ENCODE measurements at regions of chr14 and their contacts with region 1.

Region 1: GRCh38 chr14:96027431-96028355 is 11.5 kb upstream of the C14orf132 start:
- DNase-seq: peak in 6 of 14 experiments; percentile 4 to 57 (median 10)
- ATAC-seq: peak; percentile 76
- H3K4me3 ChIP-seq: no peak overlapping the region
- H3K4me3 Mint-ChIP-seq: peak overlapping the region; percentile 30
- H3K27ac ChIP-seq: peak overlapping the region in 1 of 2 donors; percentile 17
- H3K27ac Mint-ChIP-seq: peak overlapping the region; percentile 94
- H3K4me1 ChIP-seq: peaks cover 16% of the 10 kb centered on the region
- H3K4me1 Mint-ChIP-seq: peaks cover 29% of the 10 kb centered on the region
- H3K27me3 ChIP-seq: peaks cover 0 to 9% of the 10 kb centered on the region in 2 experiments
- H3K27me3 Mint-ChIP-seq: no peaks in the 10 kb centered on the region
- CTCF ChIP-seq: no peak

Region 2: GRCh38 chr14:95952945-95953724 is 74.6 kb before region 1 on chr14:
- CTCF ChIA-PET with region 1: no interaction called
- POLR2A ChIA-PET with region 1: no interaction called
- intact Hi-C with region 1: no loop called
- DNase-seq: no peak
- ATAC-seq: no peak
- H3K4me3 ChIP-seq: no peak overlapping the region
- H3K4me3 Mint-ChIP-seq: no peak overlapping the region
- H3K27ac ChIP-seq: no peak overlapping the region
- H3K27ac Mint-ChIP-seq: no peak overlapping the region
- H3K4me1 ChIP-seq: no peaks in the 10 kb centered on the region
- H3K4me1 Mint-ChIP-seq: no peaks in the 10 kb centered on the region
- H3K27me3 ChIP-seq: peaks cover 0 to 4% of the 10 kb centered on the region in 2 experiments
- H3K27me3 Mint-ChIP-seq: peaks cover 64% of the 10 kb centered on the region
- CTCF ChIP-seq: no peak

Region 3: DNA sequence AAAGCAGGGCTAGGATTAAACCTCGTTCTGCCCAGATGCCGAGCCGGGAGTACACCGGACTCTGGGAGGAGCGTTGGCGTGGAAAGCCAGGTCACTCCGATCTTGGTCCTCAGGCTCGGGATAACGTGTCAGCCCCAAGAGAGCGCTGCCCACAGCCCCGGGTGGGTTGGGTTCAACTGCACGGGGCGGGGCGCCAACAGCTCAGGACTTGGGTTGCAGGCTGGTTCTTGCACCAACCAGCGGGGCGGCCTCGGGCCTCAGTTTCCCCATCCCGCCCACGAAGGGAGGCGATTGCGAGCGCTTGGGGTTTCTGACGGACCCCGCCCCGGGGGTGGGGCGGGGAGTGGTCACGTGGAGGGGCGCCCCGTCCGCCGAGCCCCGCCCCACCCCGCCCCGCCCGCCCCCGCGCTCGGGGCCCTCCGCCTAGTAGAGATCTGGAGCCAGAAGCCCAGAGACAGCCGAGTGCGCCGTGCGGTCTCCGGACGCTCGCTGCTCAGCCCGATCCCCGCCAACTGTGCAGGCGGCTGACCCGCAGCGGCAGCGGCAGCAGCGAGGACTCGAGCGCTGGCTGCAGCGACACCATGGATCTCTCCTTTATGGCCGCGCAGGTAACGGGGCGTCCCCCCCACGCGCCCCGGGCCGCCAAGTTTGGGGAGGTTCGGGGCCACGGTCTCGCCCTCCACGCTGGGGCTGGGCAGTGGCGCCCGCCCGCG is 11.4 kb after region 1 on chr14 and contains the start of gene C14orf132:
- CTCF ChIA-PET with region 1: no interaction called
- POLR2A ChIA-PET with region 1: interaction called, 10 read pairs
- intact Hi-C with region 1: no loop called
- DNase-seq: peak; percentile 20 to 70 (median 47)
- ATAC-seq: peak; percentile 81
- H3K4me3 ChIP-seq: peak within 1 kb of the TSS; percentile 57
- H3K4me3 Mint-ChIP-seq: peak within 1 kb of the TSS; percentile 90
- H3K27ac ChIP-seq: no peak within 1 kb of the TSS
- H3K27ac Mint-ChIP-seq: no peak within 1 kb of the TSS
- H3K4me1 ChIP-seq: peaks cover 15% of the 10 kb centered on the region
- H3K4me1 Mint-ChIP-seq: peaks cover 49% of the 10 kb centered on the region
- H3K27me3 ChIP-seq: peaks cover 29% of the 10 kb centered on the region in 2 experiments
- H3K27me3 Mint-ChIP-seq: peaks cover 50% of the 10 kb centered on the region
- CTCF ChIP-seq: no peak
- total RNA-seq, gene C14orf132: 2.0 to 2.4 TPM